GM10248 (cell line): ENCODE measurements at regions of chr2 and their contacts with region 1.

Region 1: DNA sequence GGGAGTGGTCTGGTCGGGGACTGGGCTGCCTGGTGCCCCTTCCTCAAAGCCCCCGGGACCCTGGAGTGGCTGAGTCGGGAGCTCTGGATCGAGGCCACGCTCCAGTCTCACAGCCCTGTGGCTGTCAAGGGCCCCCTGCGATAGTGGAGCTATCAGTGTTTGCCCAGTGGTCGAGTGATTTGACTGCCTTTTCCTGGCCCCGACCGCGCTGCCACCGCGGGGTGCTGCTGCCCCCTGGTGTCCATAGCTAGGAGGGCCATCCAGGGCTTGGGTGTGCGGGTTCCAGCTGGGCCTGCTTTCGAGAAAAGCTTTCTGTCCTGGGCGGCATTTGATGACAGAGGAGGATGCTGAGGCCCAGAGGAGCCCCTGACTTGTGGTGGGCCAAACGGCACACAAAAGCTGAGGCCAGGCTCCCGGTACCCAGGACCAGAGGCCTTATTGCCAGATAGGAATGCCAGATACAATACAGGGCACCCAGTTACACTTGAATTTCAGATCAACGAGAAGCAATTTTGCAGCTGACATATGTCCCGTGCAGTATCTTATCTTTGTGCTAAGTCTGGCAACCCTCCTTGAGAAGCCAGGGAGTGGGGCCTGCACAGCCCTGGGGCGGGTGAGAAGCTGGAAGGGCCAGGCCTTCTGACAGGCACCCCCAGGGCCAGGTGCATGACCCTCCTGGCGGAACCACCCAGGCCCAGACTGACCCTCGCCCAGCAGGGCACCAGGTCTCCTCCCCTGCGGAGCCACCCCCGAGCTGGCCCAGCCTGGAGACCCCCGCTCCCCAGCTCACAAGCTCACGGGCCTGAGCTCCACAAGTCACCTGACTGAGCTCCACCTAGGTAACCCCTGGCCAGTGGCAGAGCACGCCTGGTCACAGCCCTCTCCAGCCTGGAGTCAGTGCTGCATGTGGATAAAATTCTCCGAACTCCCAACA is 13.0 kb downstream of the ODC1 start:
- DNase-seq: peak; percentile 89
- CTCF ChIP-seq: peak; percentile 96

Region 2: GRCh38 chr2:9984217-9984739 is 450.9 kb before region 1 on chr2:
- CTCF ChIA-PET with region 1: interaction called, 23 read pairs
- POLR2A ChIA-PET with region 1: no interaction called
- DNase-seq: peak; percentile 75
- CTCF ChIP-seq: peak; percentile 67

Region 3: DNA sequence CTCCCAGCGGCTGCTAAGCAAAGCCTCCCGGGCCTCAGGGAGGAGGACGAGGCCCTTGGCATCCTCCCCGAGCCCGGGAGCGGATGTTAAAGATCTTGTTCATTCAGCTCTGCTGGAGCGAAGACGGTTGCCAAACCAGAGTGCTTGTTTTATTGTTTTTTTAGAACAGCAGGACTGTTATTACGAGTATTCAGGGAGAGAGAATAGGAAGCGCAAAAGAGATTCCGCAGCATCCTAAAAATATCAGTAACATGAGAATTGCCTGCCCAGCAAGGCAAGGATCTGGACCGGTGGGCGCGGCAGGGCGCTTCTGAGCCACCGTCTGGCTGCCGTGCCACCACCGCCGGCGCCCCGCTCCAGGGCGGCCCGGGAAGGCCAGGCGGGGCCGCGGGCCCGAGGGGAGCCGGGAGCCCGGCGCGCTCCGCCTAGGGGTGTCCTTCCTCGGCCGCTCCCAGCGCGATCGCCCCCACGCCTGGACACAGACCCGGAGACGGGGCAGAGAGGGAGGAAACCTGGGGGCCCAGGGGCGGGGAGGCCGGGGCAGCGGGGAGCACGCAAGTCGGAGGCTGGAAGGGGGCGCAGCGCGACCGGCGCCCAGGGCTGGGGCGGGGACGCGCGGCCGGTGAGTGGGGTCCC is 355.8 kb before region 1 on chr2:
- CTCF ChIA-PET with region 1: interaction called, 194 read pairs
- POLR2A ChIA-PET with region 1: no interaction called
- DNase-seq: peak; percentile 42
- CTCF ChIP-seq: no peak

Region 4: DNA sequence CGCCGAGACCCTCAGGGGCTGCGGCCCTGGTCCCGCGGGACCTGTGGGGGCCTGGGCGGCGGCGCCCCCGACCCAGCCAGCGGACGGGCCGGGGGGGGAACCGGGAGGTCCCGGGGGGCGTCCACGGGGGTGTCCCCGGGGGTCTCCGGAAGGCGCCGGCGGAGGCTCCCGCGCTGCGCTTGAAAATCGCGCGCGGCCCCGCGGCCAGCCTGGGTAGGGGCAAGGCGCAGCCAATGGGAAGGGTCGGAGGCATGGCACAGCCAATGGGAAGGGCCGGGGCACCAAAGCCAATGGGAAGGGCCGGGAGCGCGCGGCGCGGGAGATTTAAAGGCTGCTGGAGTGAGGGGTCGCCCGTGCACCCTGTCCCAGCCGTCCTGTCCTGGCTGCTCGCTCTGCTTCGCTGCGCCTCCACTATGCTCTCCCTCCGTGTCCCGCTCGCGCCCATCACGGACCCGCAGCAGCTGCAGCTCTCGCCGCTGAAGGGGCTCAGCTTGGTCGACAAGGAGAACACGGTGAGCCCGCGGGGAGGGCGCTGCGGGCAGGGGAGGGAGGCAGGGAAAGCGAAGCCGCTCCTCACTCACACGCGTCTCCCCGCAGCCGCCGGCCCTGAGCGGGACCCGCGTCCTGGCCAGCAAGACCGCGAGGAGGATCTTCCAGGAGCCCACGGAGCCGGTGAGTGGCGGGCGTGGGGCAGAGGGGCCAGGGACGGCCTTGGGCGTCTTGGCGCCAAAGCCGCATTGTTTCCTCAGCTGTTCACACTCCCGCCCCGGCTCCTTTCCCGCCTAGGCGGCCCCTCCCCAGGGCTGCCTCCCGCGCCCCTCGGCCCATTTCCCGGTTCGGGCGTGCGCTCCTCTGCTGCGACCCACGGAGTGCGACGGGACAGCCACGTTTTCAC is 312.5 kb before region 1 on chr2 and contains the start of gene RRM2:
- CTCF ChIA-PET with region 1: interaction called, 181 read pairs
- POLR2A ChIA-PET with region 1: interaction called, 3 read pairs
- DNase-seq: peak; percentile 96
- CTCF ChIP-seq: no peak

Region 5: DNA sequence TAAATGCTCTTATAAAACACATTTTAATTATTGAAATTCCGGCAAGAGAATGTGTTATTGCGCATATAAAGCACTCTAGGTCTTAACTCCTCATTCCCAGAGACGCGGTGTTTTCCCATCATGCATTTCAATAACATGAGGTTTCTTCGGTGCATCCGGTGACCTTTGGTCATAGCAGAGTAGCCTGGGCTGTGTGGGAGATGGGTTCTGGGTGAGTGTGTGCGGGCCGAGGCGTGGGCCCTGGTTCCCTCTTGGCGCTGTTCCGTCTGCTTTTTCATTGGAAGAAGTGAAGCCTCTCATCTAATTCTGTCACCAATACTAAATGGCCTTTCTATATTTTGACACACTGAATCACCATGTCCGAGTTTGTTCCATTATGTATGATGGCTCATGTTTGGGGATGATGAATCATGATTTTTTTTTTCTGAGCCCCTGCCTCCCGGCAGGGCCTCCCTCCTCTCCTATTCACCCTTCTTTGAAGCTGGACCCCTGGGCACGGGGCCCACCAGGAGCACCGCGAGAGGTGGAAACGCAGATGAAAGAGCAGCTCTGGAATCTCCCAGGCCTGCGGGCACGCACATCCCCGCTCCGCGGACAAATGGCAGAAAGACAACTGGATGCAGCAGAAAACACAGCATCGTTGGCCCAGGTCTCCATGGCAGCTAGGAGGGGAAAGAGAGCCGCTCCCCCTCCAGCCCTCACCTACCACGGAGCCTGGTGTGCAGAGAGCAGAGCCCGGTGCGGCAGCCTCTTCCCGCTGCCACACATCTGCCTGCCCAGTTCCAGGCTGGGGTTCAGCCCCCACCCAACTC is 218.3 kb before region 1 on chr2:
- CTCF ChIA-PET with region 1: no interaction called
- POLR2A ChIA-PET with region 1: no interaction called
- DNase-seq: no peak
- CTCF ChIP-seq: no peak

Region 6: DNA sequence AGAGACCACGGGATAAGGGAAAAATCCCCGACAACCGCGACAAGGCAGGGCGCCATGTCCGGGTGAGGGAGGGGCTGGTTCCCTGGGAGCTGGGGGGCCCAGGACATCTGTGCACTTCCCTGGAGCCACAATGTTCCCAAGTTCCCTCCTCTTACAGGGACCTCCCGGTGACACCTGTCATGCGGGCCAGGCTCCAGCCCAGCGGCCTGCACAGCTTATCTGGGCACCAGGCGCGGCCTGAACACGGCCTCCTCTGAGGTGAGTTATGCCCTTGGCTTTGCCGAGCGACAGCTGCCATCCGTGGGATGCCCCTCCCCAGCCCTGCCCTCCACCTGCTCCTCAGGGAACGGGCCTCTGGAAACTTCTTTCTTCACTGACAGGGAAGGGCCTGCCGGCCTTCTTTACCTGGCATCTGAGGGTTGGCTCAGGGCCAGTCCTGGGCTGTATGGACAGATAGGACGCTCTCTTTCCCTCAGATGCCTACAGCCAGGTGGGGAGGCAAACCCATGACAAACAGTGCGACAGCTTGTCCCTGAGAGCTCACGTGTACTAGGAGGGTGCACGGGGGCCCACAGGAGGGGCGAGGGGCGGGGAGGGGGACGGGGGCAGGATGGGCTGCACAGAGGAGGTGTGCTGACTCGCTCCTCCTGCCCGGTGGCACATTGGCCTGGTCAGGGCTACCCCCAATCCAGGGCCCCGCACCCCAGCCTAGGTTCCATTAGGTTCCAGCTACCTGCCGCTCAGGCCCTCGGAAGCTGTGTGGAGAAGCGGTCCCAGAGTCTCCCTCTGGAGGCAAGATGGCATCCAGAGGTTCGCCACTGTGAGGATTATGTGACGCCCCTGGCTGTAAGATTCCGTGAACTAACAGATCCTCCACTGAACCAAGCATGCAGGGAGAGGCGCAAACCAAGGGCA is 167.3 kb before region 1 on chr2:
- CTCF ChIA-PET with region 1: interaction called, 28 read pairs
- POLR2A ChIA-PET with region 1: no interaction called
- DNase-seq: no peak
- CTCF ChIP-seq: no peak

Region 7: GRCh38 chr2:10408649-10409579 is 26.2 kb before region 1 on chr2:
- CTCF ChIA-PET with region 1: interaction called, 168 read pairs
- POLR2A ChIA-PET with region 1: interaction called, 3 read pairs
- DNase-seq: peak; percentile 88
- CTCF ChIP-seq: peak; percentile 93

Region 8: DNA sequence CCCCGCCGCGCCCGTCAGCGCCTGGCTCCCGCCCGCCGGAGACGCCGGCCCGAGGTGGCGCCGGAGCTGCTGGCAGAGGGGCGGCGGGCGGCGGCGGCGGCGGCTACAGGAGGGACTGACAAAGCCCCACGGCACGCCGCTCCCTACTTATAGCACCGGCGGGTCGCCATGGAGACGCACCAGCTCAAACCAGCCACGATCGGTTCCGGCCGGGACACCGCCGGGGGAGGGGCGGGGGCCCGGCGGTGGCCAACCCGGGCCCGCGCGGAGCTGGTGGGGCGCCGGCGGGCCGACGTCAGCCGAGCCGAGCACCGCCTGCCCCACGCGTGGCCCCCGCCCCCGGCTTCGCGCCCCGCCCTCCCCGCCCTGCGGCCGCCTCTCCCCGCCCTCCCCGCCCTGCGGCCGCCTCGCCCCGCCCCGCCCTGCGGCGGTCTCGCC is 13.1 kb after region 1 on chr2 and contains the start of gene ODC1:
- CTCF ChIA-PET with region 1: interaction called, 127 read pairs
- POLR2A ChIA-PET with region 1: interaction called, 22 read pairs
- DNase-seq: peak; percentile 98
- CTCF ChIP-seq: no peak

Region 9: GRCh38 chr2:10810202-10811161 is 375.3 kb after region 1 on chr2:
- CTCF ChIA-PET with region 1: no interaction called
- POLR2A ChIA-PET with region 1: no interaction called
- DNase-seq: no peak
- CTCF ChIP-seq: no peak